OCI-LY7 (cell line): ENCODE measurements at regions of chr5 and their contacts with region 1.

Region 1: GRCh38 chr5:79857714-79858409 is 133.2 kb downstream of the MTX3 start:
- DNase-seq: peak; percentile 73
- H3K4me3 ChIP-seq: no peak overlapping the region
- H3K27ac ChIP-seq: no peak overlapping the region
- H3K4me1 ChIP-seq: no peaks in the 10 kb centered on the region
- CTCF ChIP-seq: peak; percentile 99

Region 2: GRCh38 chr5:79702606-79703382 is 155.1 kb before region 1 on chr5:
- CTCF ChIA-PET with region 1: no interaction called
- POLR2A ChIA-PET with region 1: no interaction called
- intact Hi-C with region 1: loop called (anchors 5 kb)
- DNase-seq: peak; percentile 29
- H3K4me3 ChIP-seq: no peak overlapping the region
- H3K27ac ChIP-seq: no peak overlapping the region
- H3K4me1 ChIP-seq: no peaks in the 10 kb centered on the region
- CTCF ChIP-seq: peak; percentile 85

Region 3: GRCh38 chr5:79829260-79829659 is 28.6 kb before region 1 on chr5:
- CTCF ChIA-PET with region 1: no interaction called
- POLR2A ChIA-PET with region 1: no interaction called
- intact Hi-C with region 1: no loop called
- DNase-seq: peak; percentile 14
- H3K4me3 ChIP-seq: no peak overlapping the region
- H3K27ac ChIP-seq: no peak overlapping the region
- H3K4me1 ChIP-seq: no peaks in the 10 kb centered on the region
- CTCF ChIP-seq: peak; percentile 61